ENCODE measurements at regions of chr4 and their contacts with region 1.

Region 1: GRCh38 chr4:184745831-184746795 is 12.2 kb upstream of the CENPU start:
- DNase-seq: peak in 2 of 3 donors; percentile 64 to 89
- ATAC-seq: peak; percentile 67
- H3K4me3 ChIP-seq: no peak overlapping the region
- H3K4me1 ChIP-seq: peaks cover 21% of the 10 kb centered on the region
- CTCF ChIP-seq: peak; percentile 58

Region 2: DNA sequence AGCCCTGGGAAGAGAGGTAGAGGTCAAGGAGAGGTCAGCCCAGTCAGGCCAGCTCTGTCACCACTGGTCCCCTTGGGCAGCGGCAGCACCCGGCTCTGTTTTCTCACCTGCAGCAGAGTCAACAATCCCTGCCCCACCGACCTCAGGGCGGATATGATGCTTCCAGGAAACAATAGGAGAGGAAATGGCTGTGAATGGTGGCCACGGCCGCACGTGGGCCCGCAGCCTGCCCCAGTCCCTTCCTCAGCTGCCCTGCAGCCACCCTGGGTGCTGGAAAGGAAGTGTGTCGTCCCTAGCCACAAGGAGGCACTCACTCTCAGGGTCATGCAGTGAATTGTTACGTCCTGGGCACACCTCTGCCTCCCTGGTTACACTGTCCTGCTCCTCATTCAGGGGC is 435.9 kb before region 1 on chr4:
- intact Hi-C with region 1: no loop called
- DNase-seq: peak; percentile 61 to 70 (median 69)
- ATAC-seq: peak; percentile 83
- H3K4me3 ChIP-seq: no peak overlapping the region
- H3K4me1 ChIP-seq: peaks cover 13% of the 10 kb centered on the region
- CTCF ChIP-seq: no peak

Region 3: DNA sequence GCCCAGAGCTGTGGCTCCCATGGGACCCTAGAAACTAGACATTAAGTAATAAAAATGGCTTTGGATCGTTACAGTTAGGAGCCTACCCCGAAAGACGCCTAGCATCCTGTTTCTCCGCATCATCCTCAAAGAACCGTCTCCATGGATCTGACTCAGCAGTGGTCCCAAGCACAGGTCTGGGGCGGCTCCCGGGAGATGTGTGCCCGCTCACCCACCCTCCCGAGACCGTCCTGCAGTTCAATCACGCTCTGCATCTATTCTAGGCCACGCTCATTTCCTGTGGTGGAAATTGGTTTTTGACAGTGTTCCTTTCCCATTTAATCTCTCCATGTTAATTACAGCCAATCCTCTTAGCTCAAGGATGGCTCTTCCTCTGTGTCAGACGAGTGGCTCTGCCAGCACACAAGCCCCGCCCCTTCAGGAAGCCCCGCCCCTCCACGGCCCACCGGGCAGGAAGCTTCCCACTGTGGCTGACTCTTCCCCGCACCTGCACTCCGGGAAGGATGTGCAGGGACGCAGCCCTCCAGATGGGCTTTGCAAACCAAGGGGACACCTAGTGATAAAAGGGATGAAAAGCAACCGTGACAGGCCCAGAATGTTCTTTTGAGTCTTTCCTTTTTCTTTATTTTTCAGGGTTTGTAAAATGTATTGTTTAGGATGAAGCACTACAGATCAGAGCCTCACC is 237.7 kb after region 1 on chr4:
- intact Hi-C with region 1: loop called in 1 of 2 experiments (anchors 10 kb)
- DNase-seq: peak; percentile 77 to 84 (median 79)
- ATAC-seq: peak; percentile 85
- H3K4me3 ChIP-seq: no peak overlapping the region
- H3K4me1 ChIP-seq: no peaks in the 10 kb centered on the region
- CTCF ChIP-seq: no peak